A549 (cell line): ENCODE measurements at regions of chr15 and their contacts with region 1.

Region 1: DNA sequence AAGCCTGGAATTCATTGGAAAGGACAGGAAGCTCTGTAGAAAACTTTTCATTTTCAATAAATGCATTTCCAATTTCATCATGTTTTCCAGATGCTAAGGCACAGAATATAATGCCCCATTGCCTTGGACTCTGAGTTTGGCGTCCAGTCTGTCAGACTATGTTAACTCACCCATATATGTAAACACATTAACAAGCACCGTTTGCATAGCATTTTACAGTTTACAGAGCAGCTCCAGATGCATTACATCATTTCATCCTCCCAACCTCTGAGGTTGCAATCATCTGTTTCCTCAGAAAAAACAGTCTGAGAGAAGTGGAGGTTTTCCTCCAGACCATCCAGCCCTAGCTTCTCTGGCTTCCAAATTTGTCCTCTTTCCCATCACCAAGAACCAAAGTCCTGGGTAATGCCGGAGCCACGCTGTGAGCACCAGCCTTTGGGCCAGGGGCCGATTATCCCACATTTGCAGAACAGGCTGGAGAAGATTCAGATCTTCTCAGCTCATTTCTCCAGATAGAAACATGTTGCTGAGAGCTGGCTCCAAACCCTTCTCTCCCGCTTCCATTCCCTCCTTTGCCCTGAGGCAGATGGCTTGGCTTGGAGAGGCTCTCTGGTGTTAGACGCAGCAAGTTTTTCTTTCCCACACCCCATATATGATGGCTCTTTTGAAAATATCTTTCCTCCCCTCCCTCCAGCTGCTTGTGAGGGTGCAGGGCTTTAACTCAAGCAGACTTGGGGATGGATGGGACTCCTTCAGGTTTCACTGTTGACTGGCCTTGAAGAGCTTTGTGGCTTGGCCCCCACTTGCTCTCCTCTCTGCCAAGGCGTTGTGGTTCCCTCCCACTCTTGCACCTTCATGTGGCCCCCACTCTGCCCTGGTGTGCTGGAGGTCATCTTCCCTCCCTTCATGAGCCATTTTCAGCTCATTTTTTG is 26.0 kb downstream of the CYP19A1 start:
- DNase-seq: no peak
- ATAC-seq: peak in 1 of 2 experiments; percentile 28; a peak in 1 of 6 replicates
- H3K4me3 ChIP-seq: no peak overlapping the region
- H3K27ac ChIP-seq: peak overlapping the region; percentile 6 to 34; a peak in 2 of 6 replicates
- H3K4me1 ChIP-seq: peaks cover 18% of the 10 kb centered on the region; the same call in 2 of the 3 replicates
- CTCF ChIP-seq: no peak
- EP300 ChIP-seq: no peak
- POLR2A ChIP-seq: no peak
- RAD21 ChIP-seq: no peak

Region 2: DNA sequence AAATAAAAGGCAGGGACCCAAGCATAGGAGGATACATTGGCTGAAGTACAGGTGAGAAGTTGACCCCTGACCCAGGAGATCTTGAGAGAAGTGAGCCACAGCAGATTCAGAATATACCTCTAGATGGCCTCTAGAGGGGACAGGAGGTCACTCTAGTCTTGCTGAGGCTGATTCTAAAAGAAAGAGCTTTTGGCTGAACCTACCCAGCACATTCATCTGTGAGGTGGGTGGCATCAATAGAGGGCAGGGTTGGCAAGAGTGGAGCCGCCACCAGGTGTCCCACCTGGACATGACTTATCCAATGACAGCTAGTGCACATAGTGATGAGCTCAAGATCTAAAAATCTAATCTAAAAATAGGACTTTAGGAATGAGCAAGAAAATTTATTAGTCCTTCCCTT is 25.6 kb before region 1 on chr15:
- CTCF ChIA-PET with region 1: interaction called, 12 read pairs
- POLR2A ChIA-PET with region 1: no interaction called
- DNase-seq: peak in 1 of 2 experiments; percentile 33
- ATAC-seq: peak; percentile 47 to 70; a peak in 4 of 6 replicates
- H3K4me3 ChIP-seq: no peak overlapping the region
- H3K27ac ChIP-seq: no peak overlapping the region
- H3K4me1 ChIP-seq: peaks cover 7% of the 10 kb centered on the region; the same call in 2 of the 3 replicates
- CTCF ChIP-seq: no peak; the same call in 2 of the 3 replicates
- EP300 ChIP-seq: no peak
- POLR2A ChIP-seq: no peak
- RAD21 ChIP-seq: 0 out of 5 replicates have a peak, but pooled peaks have one; percentile 3 to 22

Region 3: GRCh38 chr15:51299187-51300066 is 13.0 kb before region 1 on chr15:
- CTCF ChIA-PET with region 1: interaction called, 24 read pairs
- POLR2A ChIA-PET with region 1: interaction called, 4 read pairs
- DNase-seq: no peak
- ATAC-seq: no peak
- H3K4me3 ChIP-seq: no peak overlapping the region
- H3K27ac ChIP-seq: no peak overlapping the region
- H3K4me1 ChIP-seq: no peaks in the 10 kb centered on the region
- CTCF ChIP-seq: no peak
- EP300 ChIP-seq: no peak
- POLR2A ChIP-seq: no peak
- RAD21 ChIP-seq: no peak